ENCODE measurements at regions of chr17 and their contacts with region 1.

Region 1: DNA sequence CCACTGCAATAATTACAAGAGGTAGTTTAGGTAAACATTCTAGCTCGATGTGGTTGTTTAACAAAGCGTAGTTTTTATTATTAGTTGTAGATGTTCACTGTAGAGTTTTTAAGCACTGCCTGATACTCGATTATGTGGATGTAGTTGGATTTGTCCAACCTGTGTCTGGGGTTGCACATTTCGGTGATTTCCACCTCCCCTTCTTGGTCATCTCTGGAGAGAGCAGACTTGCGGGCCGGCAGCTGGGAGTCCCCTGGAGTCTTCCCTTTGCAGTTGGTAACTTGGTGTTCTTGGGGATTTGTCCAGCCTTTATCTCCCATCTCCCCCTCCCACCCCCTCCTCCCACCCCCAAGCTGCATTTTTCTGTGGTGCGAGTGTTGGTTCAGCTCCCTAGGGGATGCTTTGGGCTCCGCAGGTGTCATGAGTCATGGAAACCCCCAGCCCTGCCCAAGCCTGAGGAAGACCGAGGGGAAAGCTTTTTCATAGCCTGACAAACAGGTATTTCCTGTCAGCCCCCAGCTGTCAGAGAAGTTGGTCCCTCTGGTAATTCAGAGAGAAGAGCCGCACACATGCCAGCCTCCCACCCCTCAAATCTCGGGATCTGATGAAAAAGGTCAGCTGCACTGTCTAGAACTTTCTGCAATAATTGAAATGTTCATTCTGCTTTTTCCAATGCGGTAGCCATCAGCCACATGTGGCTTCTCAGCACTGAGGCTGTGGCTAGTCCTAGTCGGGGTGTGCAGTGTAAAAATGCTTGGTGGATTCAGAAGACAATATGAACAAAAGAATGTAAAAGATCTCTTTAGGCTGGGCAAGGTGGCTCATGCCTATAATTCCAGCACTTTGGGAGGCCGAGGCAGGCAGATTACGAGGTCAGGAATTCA is 50.3 kb downstream of the KSR1 start:
- DNase-seq: peak; percentile 83 to 90
- H3K4me3 ChIP-seq: no peak overlapping the region
- H3K4me3 Mint-ChIP-seq: peak overlapping the region; percentile 50
- H3K27ac Mint-ChIP-seq: peak overlapping the region; percentile 91
- H3K4me1 ChIP-seq: peaks cover 48% of the 10 kb centered on the region
- H3K4me1 Mint-ChIP-seq: peaks cover 43% of the 10 kb centered on the region
- H3K27me3 ChIP-seq: no peaks in the 10 kb centered on the region
- H3K27me3 Mint-ChIP-seq: no peaks in the 10 kb centered on the region
- CTCF ChIP-seq: peak in 1 of 2 experiments; percentile 10

Region 2: GRCh38 chr17:27523712-27524111 is 17.1 kb after region 1 on chr17:
- CTCF ChIA-PET with region 1: no interaction called
- POLR2A ChIA-PET with region 1: no interaction called
- intact Hi-C with region 1: loop called (anchors 2 kb)
- DNase-seq: no peak
- H3K4me3 ChIP-seq: no peak overlapping the region
- H3K4me3 Mint-ChIP-seq: no peak overlapping the region
- H3K27ac Mint-ChIP-seq: peak overlapping the region; percentile 8
- H3K4me1 ChIP-seq: peaks cover 20% of the 10 kb centered on the region
- H3K4me1 Mint-ChIP-seq: peaks cover 32% of the 10 kb centered on the region
- H3K27me3 ChIP-seq: no peaks in the 10 kb centered on the region
- H3K27me3 Mint-ChIP-seq: no peaks in the 10 kb centered on the region
- CTCF ChIP-seq: no peak

Region 3: DNA sequence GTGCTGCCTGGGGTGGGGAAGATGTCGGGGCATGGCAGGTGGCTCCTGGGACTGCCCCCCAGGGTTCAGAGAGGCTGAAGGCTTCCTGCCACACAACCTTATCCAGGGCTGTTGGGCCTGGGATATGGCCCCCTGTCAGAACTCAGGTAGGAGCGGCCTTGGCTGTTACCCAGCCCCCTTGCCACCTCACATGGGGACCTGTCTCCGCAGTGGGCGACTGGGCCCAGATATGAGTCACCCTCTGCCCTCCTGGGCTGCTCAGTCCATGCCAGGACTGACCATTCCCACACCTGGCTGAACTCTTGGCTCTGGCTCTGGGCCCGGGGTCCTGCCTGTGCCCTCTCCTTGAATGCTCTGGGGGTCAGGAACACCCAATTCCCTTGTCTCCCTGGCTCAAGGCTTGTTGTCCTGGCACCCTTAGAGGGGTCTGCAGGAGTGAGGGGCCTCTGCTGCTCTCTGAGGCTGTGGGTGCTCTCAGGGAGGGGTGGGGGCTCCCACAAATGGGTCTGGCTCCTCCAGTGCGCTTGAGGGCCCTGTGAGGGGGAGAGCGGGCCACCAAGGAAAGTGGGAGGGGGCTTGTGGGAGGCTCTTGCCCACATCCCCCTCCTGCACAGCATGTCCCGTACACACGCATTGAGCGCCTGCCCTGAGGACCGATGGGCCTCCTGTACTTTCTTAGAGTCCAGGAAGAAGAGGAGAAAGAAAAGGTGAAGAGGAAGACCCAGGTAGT is 160.4 kb after region 1 on chr17:
- CTCF ChIA-PET with region 1: no interaction called
- POLR2A ChIA-PET with region 1: no interaction called
- intact Hi-C with region 1: no loop called
- DNase-seq: peak in 1 of 2 experiments; percentile 43
- H3K4me3 ChIP-seq: no peak overlapping the region
- H3K4me3 Mint-ChIP-seq: no peak overlapping the region
- H3K27ac Mint-ChIP-seq: no peak overlapping the region
- H3K4me1 ChIP-seq: no peaks in the 10 kb centered on the region
- H3K4me1 Mint-ChIP-seq: no peaks in the 10 kb centered on the region
- H3K27me3 ChIP-seq: 0 out of 2 replicates have a peak, but pooled peaks cover 1% of the 10 kb centered on the region
- H3K27me3 Mint-ChIP-seq: peaks cover 6% of the 10 kb centered on the region
- CTCF ChIP-seq: no peak

Region 4: DNA sequence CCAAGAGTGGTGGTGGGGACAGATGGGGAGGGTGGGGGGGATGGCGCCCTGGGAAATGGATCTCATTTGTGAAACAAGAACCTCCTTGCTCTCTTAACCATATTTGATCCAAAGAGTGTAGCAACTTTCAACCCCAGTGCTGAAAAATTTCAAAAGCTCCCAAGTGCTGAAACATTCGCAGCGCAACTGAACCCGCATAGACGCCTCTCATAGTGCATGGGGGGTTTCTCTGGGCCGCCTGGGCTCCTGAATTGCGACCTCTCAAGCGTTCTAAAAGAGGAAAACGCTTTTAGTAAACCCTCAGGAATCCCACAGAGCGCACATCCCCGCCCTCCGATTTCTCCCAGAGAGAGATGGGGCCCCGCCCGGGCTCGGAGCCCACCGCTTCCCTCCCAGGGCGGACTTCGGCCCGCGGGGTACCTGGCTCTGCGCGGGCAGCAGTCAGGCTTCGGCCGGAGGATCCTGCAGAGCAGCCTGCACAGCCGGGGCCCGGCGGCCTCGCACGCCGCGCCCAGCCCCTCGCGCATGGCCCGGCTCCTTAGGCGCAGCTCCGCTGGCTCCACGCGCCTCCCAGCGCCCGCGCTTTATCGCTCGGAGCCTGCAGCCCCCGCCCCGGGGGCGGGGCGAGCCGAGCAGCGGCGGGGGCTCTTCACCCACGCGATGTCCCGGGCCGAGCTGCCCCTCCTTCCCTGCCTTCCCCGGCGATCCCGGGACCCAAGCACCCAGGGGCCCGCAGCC is 286.7 kb after region 1 on chr17:
- CTCF ChIA-PET with region 1: no interaction called
- POLR2A ChIA-PET with region 1: interaction called, 15 read pairs
- intact Hi-C with region 1: no loop called
- DNase-seq: peak; percentile 83 to 90
- H3K4me3 ChIP-seq: peak overlapping the region; percentile 56
- H3K4me3 Mint-ChIP-seq: peak overlapping the region; percentile 80
- H3K27ac Mint-ChIP-seq: peak overlapping the region; percentile 53
- H3K4me1 ChIP-seq: peaks cover 42% of the 10 kb centered on the region
- H3K4me1 Mint-ChIP-seq: peaks cover 44% of the 10 kb centered on the region
- H3K27me3 ChIP-seq: no peaks in the 10 kb centered on the region
- H3K27me3 Mint-ChIP-seq: no peaks in the 10 kb centered on the region
- CTCF ChIP-seq: no peak

Measured in Caco-2 (cell line).